ENCODE measurements at regions of chr2 and their contacts with region 1.

Region 1: GRCh38 chr2:195656859-195657633 is at the start of gene SLC39A10:
- DNase-seq: peak; percentile 97
- H3K4me3 Mint-ChIP-seq: peak within 1 kb of the TSS; percentile 99
- H3K27ac Mint-ChIP-seq: peak within 1 kb of the TSS; percentile 100
- H3K4me1 Mint-ChIP-seq: peaks cover 32% of the 10 kb centered on the region
- H3K27me3 Mint-ChIP-seq: no peaks in the 10 kb centered on the region
- total RNA-seq, gene SLC39A10: 32.4 and 32.5 TPM in 2 replicates

Region 2: DNA sequence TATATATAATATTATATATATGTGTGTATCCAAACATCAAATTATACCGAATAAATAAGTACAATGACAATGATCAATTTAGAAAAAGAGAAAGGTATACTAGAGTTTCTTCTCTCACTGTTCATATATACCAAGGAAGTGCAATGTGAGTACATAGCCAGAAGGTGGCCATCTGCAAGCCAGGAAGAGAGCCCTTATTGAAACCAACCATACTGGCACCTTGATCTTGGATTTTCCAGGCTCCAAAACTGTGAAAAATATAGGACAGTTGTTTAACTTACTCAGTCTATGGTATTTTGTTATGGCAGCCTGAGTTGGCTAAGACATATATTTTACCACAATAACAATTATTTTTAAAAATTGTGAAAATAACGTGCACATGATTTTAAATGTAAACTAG is 1490.2 kb before region 1 on chr2:
- intact Hi-C with region 1: loop called (anchors 5 kb)
- DNase-seq: no peak
- H3K4me3 Mint-ChIP-seq: no peak overlapping the region
- H3K27ac Mint-ChIP-seq: no peak overlapping the region
- H3K4me1 Mint-ChIP-seq: no peaks in the 10 kb centered on the region
- H3K27me3 Mint-ChIP-seq: no peaks in the 10 kb centered on the region

Region 3: DNA sequence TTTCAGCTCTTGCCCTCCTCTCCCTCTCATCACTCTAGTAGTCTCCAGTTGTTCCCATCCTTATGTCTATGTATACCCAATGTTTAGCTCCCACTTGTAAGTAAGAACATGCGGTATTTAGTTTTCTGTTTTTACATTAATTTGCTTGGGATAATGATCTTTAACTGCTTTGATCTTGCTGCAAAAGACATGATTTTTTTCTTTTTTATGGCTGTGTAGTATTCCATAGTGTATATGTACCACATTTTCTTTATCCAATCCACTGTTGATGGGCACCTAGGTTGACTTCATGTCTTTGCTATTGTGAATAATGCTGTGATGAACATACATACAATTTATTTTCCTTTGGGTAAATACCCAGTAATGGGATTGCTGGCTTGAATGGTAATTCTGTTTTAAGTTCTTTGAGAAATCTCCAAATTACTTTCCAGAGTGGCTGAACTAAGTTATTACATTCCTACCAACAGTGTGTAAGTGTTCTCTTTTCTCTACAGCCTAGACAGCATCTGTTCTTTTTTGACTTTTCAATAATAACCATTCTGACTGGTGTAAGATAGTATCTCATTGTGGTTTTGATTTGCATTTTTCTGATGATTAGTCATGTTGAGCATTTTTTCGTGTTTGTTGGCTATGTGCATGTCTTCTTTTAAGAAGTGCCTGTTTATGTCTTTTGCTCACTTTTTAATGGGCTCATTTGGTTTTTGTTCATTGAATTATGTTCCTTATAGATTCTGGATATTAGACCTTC is 179.6 kb before region 1 on chr2:
- intact Hi-C with region 1: loop called (anchors 1 kb)
- DNase-seq: no peak
- H3K4me3 Mint-ChIP-seq: peak overlapping the region; percentile 0
- H3K27ac Mint-ChIP-seq: peak overlapping the region; percentile 59
- H3K4me1 Mint-ChIP-seq: peaks cover 53% of the 10 kb centered on the region
- H3K27me3 Mint-ChIP-seq: no peaks in the 10 kb centered on the region

Region 4: GRCh38 chr2:195533771-195534642 is 123.0 kb before region 1 on chr2:
- intact Hi-C with region 1: loop called (anchors 1 kb)
- DNase-seq: peak; percentile 60
- H3K4me3 Mint-ChIP-seq: peak overlapping the region; percentile 82
- H3K27ac Mint-ChIP-seq: peak overlapping the region; percentile 96
- H3K4me1 Mint-ChIP-seq: peaks cover 86% of the 10 kb centered on the region
- H3K27me3 Mint-ChIP-seq: no peaks in the 10 kb centered on the region

Region 5: GRCh38 chr2:195575879-195576401 is 81.1 kb before region 1 on chr2:
- intact Hi-C with region 1: loop called (anchors 1 kb)
- DNase-seq: no peak
- H3K4me3 Mint-ChIP-seq: no peak overlapping the region
- H3K27ac Mint-ChIP-seq: peak overlapping the region; percentile 13
- H3K4me1 Mint-ChIP-seq: peaks cover 58% of the 10 kb centered on the region
- H3K27me3 Mint-ChIP-seq: no peaks in the 10 kb centered on the region

Region 6: GRCh38 chr2:196068271-196069209 is 411.5 kb after region 1 on chr2 and contains the start of gene DNAH7:
- intact Hi-C with region 1: loop called (anchors 2 kb)
- DNase-seq: peak; percentile 88
- H3K4me3 Mint-ChIP-seq: peak within 1 kb of the TSS; percentile 87
- H3K27ac Mint-ChIP-seq: peak within 1 kb of the TSS; percentile 89
- H3K4me1 Mint-ChIP-seq: peaks cover 15% of the 10 kb centered on the region
- H3K27me3 Mint-ChIP-seq: peaks cover 32% of the 10 kb centered on the region
- total RNA-seq, gene DNAH7: not detected in 2 replicates

Region 7: GRCh38 chr2:196176142-196176738 is 519.2 kb after region 1 on chr2:
- intact Hi-C with region 1: no loop called
- DNase-seq: peak; percentile 83
- H3K4me3 Mint-ChIP-seq: peak overlapping the region; percentile 69
- H3K27ac Mint-ChIP-seq: peak overlapping the region; percentile 90
- H3K4me1 Mint-ChIP-seq: peaks cover 72% of the 10 kb centered on the region
- H3K27me3 Mint-ChIP-seq: no peaks in the 10 kb centered on the region

Region 8: GRCh38 chr2:196263181-196263747 is 606.2 kb after region 1 on chr2:
- intact Hi-C with region 1: loop called (anchors 5 kb)
- DNase-seq: peak; percentile 57
- H3K4me3 Mint-ChIP-seq: peak overlapping the region; percentile 65
- H3K27ac Mint-ChIP-seq: peak overlapping the region; percentile 88
- H3K4me1 Mint-ChIP-seq: peaks cover 79% of the 10 kb centered on the region
- H3K27me3 Mint-ChIP-seq: no peaks in the 10 kb centered on the region